Cardiac septum (tissue), 1 donor: ENCODE measurements at regions of chr2 and their contacts with region 1.

Region 1: GRCh38 chr2:238263204-238264071 is 23.6 kb upstream of the HES6 start:
- DNase-seq: peak; percentile 95

Region 2: GRCh38 chr2:238120463-238121298 is 142.8 kb before region 1 on chr2:
- intact Hi-C with region 1: loop called (anchors 5 kb)
- DNase-seq: no peak

Region 3: GRCh38 chr2:238160206-238161109 is 103.0 kb before region 1 on chr2:
- intact Hi-C with region 1: loop called (anchors 5 kb)
- DNase-seq: no peak